Heart right ventricle (tissue), 16 donors: ENCODE measurements at regions of chr20 and their contacts with region 1.

Region 1: DNA sequence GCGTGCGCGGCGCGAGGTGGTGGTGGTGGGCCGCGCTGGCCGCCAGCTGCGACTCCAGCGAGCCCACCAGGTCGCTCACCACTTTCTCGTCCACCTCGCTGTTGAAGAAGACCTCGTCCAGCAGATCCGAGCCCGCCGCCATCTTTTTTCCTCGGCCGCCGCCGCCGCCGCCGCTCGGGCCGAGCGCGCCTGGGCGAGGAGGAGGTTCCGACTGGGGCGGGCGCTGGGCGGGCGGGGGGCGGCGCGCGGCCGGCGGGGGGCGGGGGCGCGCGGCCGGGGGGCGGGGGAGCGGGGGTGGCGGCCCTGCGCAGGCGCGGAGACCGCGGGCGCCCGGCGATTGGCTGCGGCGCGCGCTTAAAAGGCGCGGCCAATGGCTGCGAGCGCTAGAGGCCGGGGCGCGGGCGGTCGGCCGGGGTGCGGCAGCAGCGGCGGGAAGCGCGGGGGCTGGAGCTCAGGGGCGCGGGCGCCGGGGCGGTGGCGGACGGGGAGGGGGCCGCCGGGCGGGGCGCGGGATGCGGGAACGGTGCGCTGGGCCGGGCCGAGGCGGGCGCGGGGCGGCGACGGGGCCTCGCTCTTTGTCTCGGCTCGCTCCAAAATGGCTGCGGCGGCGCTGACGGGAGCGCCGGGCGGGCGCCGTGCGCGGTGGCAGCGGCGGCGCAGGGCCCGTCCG is at the start of gene TAF4:
- DNase-seq: peak; percentile 67 to 81
- ATAC-seq: peak; percentile 28 to 78 (median 64)
- H3K4me3 ChIP-seq: peak within 1 kb of the TSS; percentile 57 to 88 (median 72)
- H3K27ac ChIP-seq: peak within 1 kb of the TSS; percentile 88 to 98 (median 92)
- H3K4me1 ChIP-seq: peaks cover 8 to 45% (median 35%) of the 10 kb centered on the region in 9 donors
- H3K27me3 ChIP-seq: no peaks in the 10 kb centered on the region
- CTCF ChIP-seq: no peak
- total RNA-seq, gene TAF4: 8.6 to 14.8 (median 11.8) TPM

Region 2: GRCh38 chr20:61311656-61312370 is 754.0 kb before region 1 on chr20:
- intact Hi-C with region 1: no loop called
- DNase-seq: no peak
- ATAC-seq: no peak
- H3K4me3 ChIP-seq: no peak overlapping the region
- H3K27ac ChIP-seq: no peak overlapping the region
- H3K4me1 ChIP-seq: no peaks in the 10 kb centered on the region
- H3K27me3 ChIP-seq: peaks cover 0 to 54% (median 14%) of the 10 kb centered on the region in 7 donors
- CTCF ChIP-seq: no peak

Region 3: DNA sequence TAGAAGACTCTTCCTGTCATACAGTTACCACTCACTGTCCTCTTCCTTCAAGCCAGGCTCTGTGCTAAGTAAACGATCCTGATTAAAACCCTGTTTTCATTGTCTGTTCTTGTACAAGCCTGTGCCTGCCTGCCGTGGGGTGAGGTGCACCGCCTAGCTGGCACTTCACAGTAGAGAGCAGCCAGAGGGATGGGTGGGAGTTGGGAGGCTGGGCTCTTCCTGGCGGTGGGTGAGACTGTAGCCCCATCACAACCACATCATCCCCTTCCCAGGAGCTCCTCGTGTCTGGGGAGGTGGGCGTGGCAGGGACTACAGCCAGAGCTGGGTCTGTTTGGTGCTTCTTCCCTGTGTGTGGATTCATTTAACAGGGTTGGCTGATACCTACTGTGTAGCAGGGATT is 382.1 kb before region 1 on chr20:
- intact Hi-C with region 1: no loop called
- DNase-seq: no peak
- ATAC-seq: no peak
- H3K4me3 ChIP-seq: no peak overlapping the region
- H3K27ac ChIP-seq: no peak overlapping the region
- H3K4me1 ChIP-seq: no peaks in the 10 kb centered on the region
- H3K27me3 ChIP-seq: peaks cover 0 to 71% (median 27%) of the 10 kb centered on the region in 7 donors
- CTCF ChIP-seq: no peak

Region 4: DNA sequence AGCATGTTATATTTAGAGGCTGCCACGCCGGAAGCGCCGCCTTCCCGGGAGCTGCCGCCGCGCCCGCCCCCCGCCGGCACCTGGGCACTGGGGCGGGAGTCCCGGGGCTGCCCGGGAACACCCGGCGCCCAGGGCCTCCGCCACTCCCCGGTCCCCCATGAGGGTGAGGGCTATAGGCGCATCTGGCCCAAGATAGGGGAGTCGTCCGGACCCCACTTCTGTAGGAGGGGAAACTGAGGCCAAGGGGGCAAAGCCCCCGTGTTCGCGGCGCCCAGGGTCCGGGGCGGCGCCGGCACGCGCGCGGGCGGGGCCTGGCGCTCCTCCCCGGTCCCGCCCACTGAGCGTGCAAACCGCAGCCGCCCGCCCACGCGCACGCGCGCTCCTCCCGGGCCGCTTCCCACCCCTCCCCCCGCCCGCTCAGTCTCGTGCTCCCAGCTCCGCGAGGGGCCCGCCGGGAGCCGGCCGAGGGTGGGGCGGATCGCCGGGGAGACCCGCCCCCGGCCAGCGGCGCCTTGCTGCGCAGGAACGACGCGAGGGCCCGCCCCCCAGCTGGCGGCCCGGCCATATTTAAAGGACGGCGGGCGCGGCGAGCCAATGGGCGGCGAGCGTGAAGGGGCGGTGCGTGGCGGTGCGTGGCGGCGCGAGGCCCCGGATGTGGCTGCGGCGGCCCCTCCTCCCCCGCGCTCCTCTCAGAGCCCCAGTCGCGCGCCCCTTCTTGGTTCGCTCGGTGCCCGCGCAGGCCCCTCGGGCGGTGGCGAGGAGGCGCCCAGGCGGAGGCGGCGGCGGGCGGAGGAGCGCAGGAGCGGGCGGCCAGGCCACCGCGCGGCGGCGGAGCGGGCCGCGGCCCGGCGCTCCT is 56.2 kb after region 1 on chr20 and contains the start of gene LSM14B:
- intact Hi-C with region 1: loop called (anchors 1 to 5 kb)
- DNase-seq: peak; percentile 95 to 98
- ATAC-seq: peak; percentile 86 to 94 (median 90)
- H3K4me3 ChIP-seq: peak within 1 kb of the TSS; percentile 65 to 94 (median 81)
- H3K27ac ChIP-seq: peak within 1 kb of the TSS; percentile 85 to 99 (median 94)
- H3K4me1 ChIP-seq: peaks cover 5 to 57% (median 41%) of the 10 kb centered on the region in 9 donors
- H3K27me3 ChIP-seq: peaks cover 0 to 15% (median 11%) of the 10 kb centered on the region in 7 donors
- CTCF ChIP-seq: no peak
- total RNA-seq, gene LSM14B: 50.8 to 63.7 (median 60.5) TPM

Region 5: DNA sequence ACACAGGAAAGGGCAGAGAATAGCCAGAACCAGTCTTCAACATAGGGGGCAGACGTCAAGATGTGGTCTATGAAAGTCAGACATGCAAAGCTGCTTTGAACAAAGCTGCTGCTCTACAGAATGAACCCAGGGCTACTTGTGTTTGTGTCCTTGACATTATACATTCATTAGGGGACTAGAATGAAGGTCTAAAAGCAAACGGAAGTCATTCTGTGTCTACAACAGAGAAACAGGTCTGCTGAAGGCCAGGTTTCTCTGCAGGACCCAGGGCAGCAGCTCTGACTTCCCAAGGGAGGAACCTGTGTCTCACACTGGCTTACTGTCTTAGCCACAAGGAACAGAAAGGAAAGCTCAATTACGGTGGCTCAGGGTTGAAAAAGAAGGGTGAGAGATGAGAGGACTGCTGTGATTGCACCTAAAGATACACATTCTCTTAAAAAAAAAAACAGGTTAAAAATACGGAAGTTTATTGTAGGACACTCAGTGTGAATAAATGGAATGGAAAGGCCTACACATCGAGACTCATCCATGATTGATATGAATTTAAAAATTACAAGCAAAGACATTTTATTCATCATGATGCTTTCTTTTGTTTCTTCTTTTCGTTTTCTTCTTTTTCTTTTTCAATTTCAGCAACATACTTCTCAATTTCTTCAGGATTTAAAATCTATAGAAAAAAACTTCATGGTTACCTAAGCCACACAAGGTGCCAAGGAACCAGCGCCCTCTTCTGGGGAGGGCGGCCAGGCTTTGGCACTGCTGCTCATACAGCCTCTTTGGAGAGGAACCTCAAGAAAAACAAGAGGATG is 70.7 kb after region 1 on chr20:
- intact Hi-C with region 1: loop called in 5 of 10 experiments (anchors 5 kb)
- DNase-seq: peak; percentile 56 to 63
- ATAC-seq: peak in 4 of 8 donors; percentile 28 to 48 (median 42)
- H3K4me3 ChIP-seq: no peak overlapping the region
- H3K27ac ChIP-seq: no peak overlapping the region
- H3K4me1 ChIP-seq: peaks cover 26 to 59% (median 49%) of the 10 kb centered on the region in 9 donors
- H3K27me3 ChIP-seq: no peaks in the 10 kb centered on the region
- CTCF ChIP-seq: peak; percentile 29 to 86 (median 79)